HEK293T (cell line): ENCODE measurements at regions of chr12 and their contacts with region 1.

Region 1: DNA sequence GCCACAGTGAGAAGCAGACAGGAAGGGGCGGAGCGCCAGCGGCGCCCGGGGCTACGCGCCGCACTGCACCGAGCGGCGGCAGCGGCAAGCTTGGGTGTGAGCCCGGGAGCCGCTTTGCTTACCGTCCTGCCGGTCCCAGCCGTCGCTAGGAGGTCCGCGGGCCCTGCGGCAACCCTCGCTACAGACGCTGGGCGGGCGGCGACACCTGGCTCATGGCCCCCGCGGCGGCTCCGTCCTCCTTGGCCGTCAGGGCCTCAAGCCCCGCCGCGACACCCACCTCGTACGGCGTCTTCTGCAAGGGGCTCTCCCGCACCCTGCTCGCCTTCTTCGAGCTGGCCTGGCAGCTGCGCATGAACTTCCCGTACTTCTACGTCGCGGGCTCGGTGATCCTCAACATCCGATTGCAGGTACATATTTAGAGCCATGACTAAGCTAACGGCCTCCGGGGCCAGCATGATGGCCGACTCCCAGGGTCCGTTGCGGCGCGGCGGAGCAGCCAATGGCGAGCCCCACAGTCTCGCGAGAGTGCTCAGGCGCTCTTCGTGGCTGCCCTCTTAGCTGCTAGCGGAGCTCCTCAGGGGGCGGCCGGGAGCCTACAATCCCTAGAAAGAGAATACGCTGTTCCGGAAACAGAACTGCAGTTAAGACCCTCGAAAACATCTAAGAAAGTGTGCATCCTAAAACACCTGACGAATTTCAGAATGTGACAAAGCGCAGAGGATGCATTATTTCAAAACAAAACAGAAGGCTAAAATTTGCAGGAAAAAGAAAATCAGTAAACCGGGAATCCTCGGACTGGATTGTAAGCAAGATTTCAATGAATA is at the start of gene SMIM10L1:
- DNase-seq: peak; percentile 88

Region 2: GRCh38 chr12:10716704-10717315 is 454.5 kb before region 1 on chr12:
- CTCF ChIA-PET with region 1: no interaction called
- POLR2A ChIA-PET with region 1: interaction called, 11 read pairs
- DNase-seq: peak; percentile 70

Region 3: GRCh38 chr12:11026121-11026520 is 145.2 kb before region 1 on chr12:
- CTCF ChIA-PET with region 1: no interaction called
- POLR2A ChIA-PET with region 1: no interaction called
- DNase-seq: no peak

Region 4: GRCh38 chr12:11182529-11182928 is 11.2 kb after region 1 on chr12:
- CTCF ChIA-PET with region 1: no interaction called
- POLR2A ChIA-PET with region 1: interaction called, 17 read pairs
- DNase-seq: no peak

Region 5: DNA sequence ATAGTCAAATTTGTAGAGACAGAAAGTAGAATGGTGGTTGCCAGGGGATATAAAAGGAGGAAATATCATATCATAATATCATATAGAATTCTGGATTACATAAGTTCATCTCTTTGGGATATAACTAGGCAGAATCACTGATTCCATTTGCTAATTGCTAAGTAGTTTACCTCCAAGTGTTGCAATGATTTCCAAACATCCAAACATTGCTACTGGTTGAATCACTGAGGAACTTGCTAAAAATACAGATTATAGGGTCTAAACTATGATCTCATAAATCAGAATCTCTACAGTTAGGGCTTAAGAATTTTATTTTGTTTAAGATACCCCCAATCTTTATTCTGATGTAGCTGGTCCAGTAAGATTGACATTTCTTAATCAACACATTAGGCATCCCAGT is 31.5 kb after region 1 on chr12:
- CTCF ChIA-PET with region 1: no interaction called
- POLR2A ChIA-PET with region 1: interaction called, 12 read pairs
- DNase-seq: no peak

Region 6: GRCh38 chr12:11228296-11228879 is 57.0 kb after region 1 on chr12:
- CTCF ChIA-PET with region 1: no interaction called
- POLR2A ChIA-PET with region 1: no interaction called
- DNase-seq: peak; percentile 59